Lower leg skin (tissue), 4 donors: ENCODE measurements at regions of chr9 and their contacts with region 1.

Region 1: DNA sequence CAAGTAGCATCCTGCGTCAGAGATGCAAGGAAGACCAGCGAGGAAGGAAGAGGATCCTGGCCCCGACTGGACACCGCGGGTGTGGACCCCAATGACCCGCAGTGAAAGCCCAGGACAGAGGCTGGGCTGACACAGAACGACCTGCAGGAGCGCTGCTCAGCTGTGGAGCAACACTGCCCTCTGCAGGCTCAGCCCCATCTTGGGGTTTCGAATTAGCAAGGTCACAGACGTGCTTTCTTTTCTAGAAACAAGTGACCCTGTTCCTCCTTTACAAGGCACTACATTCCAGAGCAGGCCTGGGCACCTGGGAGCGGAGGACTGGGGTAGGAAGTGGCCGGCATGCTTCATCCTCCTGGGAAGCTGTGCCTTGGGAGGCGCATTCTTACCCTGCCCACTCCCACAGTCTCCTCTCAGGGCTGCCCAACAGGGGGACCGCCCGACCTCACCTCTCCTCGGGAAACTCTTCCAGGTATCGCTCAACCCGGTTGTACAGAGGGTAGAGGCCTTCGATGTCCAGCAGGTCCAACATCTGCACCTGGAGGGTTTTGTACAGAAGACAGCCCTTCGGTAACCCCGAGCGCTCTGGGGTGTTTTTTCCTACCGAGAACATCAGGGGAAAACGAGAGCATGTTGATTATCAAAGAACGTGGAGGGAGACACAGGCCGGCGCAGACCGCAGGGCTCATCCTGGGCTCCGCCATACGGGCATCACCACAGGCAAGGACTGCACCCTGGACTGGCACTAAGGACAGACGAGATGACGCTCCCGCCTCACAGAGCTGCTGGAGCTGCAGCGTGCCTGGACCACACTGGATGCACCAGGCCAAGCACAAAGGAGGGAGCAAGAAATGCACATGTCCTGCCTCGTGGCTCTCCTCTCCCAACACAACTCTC is 35.0 kb downstream of the IPPK start:
- DNase-seq: peak; percentile 61 to 92
- H3K4me3 ChIP-seq: no peak overlapping the region
- CTCF ChIP-seq: peak in 1 of 3 donors; percentile 67
- POLR2A ChIP-seq: no peak

Region 2: DNA sequence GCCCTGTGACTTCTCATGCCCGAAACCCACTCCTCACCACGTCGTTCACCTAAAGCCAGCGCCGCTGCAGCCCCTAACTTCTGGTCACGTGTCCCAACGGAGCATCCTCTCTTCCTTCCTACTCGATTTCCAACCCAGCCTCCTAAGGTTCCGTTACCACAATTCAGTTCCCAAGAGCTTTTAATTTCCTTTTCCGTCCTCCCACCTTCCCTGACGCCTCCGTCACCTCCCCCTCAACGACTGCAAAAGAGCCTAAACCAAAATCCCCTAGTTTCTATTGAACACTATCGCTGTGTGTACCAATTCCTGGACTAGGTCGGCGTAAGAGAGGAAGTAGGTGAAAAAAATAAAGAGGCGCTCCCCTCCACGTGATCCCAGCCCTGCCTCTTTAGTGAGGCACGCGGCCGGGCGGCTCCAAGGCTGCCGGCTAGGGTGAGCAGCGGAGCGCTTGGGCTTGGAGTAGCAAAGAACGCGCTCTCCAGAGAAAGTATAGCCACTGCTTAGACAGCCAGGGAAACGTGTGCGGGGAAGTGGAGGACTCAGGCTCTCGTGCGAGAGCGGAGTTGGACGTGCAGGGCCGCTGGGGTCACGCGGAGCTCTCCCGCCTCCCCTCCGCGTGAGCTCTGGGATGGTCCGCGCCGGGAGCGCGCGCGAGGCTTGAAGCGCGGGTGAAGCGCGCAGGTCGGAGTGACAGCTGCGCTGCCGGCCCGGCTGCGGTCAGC is 309.5 kb before region 1 on chr9 and contains the starts of genes CENPP and NOL8:
- intact Hi-C with region 1: loop called (anchors 5 kb)
- DNase-seq: peak; percentile 86 to 96
- H3K4me3 ChIP-seq: peak within 1 kb of the TSS; percentile 68
- CTCF ChIP-seq: no peak
- POLR2A ChIP-seq: no peak
- total RNA-seq, gene CENPP: 7.8 to 28.8 (median 12.2) TPM
- total RNA-seq, gene NOL8: 20.4 to 40.8 (median 21.9) TPM

Region 3: DNA sequence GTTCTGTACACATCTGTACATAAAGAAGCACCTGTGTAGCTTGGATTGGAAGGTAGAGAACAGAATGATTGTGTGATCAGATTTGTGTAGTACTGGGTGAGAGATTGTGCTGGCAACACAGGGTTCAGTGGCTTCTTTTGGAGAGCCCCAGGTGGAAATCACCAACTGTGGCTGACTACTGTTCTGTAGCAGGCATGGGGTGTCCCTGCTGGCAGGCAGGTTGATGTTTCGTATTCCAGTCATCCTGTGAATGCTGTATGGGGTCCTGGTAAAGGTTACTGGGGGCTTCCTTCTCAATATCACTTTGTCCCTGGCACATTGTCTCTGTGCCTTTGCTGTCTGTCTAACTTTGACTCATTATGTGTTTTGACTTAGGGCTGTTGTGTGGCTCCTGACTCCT is 158.0 kb before region 1 on chr9:
- intact Hi-C with region 1: no loop called
- DNase-seq: no peak
- H3K4me3 ChIP-seq: no peak overlapping the region
- CTCF ChIP-seq: no peak
- POLR2A ChIP-seq: no peak

Region 4: DNA sequence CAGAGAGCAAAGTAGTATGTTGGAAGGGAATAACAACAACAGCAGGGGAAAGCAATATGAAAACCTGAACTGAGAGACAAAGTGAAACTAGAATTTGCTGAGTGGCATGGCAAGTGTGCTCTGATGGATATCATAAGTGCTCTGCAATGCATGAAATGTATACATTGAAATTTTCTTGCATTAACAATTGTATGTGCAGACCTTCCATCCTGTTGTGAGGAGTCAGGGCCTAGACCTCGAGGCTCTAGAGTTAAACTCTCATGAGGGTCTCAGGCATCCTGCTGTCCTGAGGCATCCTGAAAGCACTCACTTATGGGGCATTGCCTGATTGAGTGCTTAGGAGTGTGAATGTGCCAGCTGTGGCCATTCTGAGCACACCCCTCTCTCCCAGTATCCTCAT is 100.3 kb before region 1 on chr9:
- intact Hi-C with region 1: no loop called
- DNase-seq: no peak
- H3K4me3 ChIP-seq: no peak overlapping the region
- CTCF ChIP-seq: no peak
- POLR2A ChIP-seq: no peak